ENCODE measurements at regions of chr20 and their contacts with region 1.

Region 1: GRCh38 chr20:3888622-3889488 is at the start of gene PANK2:
- DNase-seq: peak; percentile 98
- H3K4me3 ChIP-seq: peak within 1 kb of the TSS; percentile 95
- H3K27ac ChIP-seq: peak within 1 kb of the TSS; percentile 81
- H3K4me1 ChIP-seq: peaks cover 32% of the 10 kb centered on the region
- CTCF ChIP-seq: peak; percentile 47
- total RNA-seq, gene PANK2: 40.9 and 46.1 TPM in 2 replicates

Region 2: GRCh38 chr20:3901028-3901705 is 12.3 kb after region 1 on chr20:
- CTCF ChIA-PET with region 1: no interaction called
- POLR2A ChIA-PET with region 1: interaction called, 21 read pairs
- intact Hi-C with region 1: no loop called
- DNase-seq: no peak
- H3K4me3 ChIP-seq: no peak overlapping the region
- H3K27ac ChIP-seq: peak overlapping the region; percentile 35
- H3K4me1 ChIP-seq: peaks cover 73% of the 10 kb centered on the region
- CTCF ChIP-seq: no peak

Measured in OCI-LY7 (cell line).